Body of pancreas (tissue), 4 donors: ENCODE measurements at regions of chr1 and their contacts with region 1.

Region 1: GRCh38 chr1:30719406-30720270 is 3.7 kb downstream of the MATN1 start:
- DNase-seq: no peak
- ATAC-seq: no peak
- H3K4me3 ChIP-seq: no peak overlapping the region
- H3K27ac ChIP-seq: peak overlapping the region; percentile 92 to 99 (median 98)
- H3K4me1 ChIP-seq: peaks cover 12% of the 10 kb centered on the region
- H3K27me3 ChIP-seq: no peaks in the 10 kb centered on the region
- CTCF ChIP-seq: no peak
- POLR2A ChIP-seq: no peak

Region 2: DNA sequence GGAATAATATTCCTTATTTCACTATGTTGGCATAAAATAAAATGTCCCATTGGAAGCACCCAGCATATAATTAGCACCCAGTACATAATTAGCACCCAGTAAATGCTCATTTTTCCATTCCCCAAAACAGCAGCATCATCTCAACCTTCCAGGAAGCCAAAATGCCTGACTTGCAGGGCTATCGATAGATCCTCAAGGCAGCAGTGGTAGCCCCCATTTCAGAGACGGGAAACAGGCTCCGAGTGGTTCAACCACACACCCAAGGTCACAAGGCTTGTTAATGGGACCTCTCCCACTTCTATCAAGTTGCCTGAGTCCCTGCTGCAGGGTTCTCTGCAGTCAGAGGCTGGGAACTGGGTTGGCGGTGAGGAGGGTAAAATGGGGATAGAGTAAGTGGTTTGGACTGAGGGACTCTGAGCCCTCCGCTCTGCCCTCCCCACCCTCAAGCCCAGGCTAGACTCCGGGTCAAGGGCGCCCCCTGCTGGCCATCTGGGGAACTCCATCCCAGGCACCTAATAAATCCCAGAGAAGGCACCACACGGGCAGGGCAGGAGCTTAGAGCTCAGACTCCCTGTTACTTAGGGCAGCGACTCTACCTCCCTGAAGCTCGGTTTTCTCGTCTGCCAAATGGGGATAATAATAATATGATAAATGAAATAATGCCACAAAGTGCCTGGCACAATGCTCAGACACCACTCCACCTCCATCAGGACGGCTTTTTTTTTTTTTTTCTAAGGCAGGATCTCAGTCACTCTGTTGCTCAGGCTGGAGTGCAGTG is 59.8 kb after region 1 on chr1:
- intact Hi-C with region 1: loop called (anchors 5 kb)
- DNase-seq: peak; percentile 73 to 84 (median 82)
- ATAC-seq: peak; percentile 74
- H3K4me3 ChIP-seq: no peak overlapping the region
- H3K27ac ChIP-seq: no peak overlapping the region
- H3K4me1 ChIP-seq: peaks cover 7% of the 10 kb centered on the region
- H3K27me3 ChIP-seq: no peaks in the 10 kb centered on the region
- CTCF ChIP-seq: peak; percentile 82 to 97 (median 90)
- POLR2A ChIP-seq: no peak